ENCODE measurements at regions of chr19 and their contacts with region 1.

Region 1: DNA sequence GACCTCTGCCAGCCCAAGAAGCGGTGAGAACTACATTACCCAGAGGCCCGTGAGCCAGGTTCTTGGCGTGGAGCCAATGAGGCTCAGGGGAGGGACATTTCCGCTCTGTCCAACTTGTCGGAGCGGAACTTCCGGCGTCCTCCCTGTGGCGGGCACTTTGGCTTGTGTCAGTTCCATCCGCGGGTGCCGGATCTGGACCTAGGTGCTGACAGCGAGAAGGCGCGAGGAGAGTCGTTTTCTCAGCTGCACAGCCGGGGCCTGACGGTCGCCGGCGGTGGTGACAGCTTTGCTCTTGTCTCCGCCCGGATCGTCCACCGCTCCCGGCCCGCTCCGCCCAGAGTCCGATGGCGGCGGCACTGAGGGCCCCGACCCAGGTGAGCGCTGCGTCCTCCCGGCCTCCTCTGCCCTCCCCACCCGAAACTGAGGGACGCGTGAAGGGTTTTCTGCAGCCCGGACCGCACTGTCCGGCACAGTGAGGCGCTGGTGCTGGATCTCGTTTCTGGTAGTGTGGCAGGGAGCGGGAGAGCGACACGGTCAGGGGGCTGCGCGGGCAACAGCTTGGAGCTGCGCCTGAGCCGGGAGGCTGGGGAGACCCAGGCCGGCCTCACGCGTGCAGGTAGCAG is at the start of gene ZNF530:
- DNase-seq: peak; percentile 61 to 81 (median 73)
- ATAC-seq: peak; percentile 97
- H3K4me3 ChIP-seq: peak within 1 kb of the TSS; percentile 87
- H3K4me3 Mint-ChIP-seq: peak within 1 kb of the TSS; percentile 71 to 92 (median 89)
- H3K27ac ChIP-seq: peak within 1 kb of the TSS; percentile 69
- H3K27ac Mint-ChIP-seq: peak within 1 kb of the TSS in 8 of 9 donors; percentile 51 to 90 (median 81)
- H3K4me1 ChIP-seq: peaks cover 10% of the 10 kb centered on the region in 2 donors
- H3K4me1 Mint-ChIP-seq: peaks cover 14 to 28% (median 22%) of the 10 kb centered on the region in 7 donors
- H3K27me3 ChIP-seq: no peaks in the 10 kb centered on the region
- H3K27me3 Mint-ChIP-seq: no peaks in the 10 kb centered on the region
- total RNA-seq, gene ZNF530: 2.0 to 10.9 (median 6.2) TPM

Region 2: GRCh38 chr19:57348136-57348535 is 251.7 kb before region 1 on chr19:
- CTCF ChIA-PET with region 1: no interaction called
- POLR2A ChIA-PET with region 1: no interaction called
- intact Hi-C with region 1: no loop called
- DNase-seq: no peak
- ATAC-seq: no peak
- H3K4me3 ChIP-seq: no peak overlapping the region
- H3K4me3 Mint-ChIP-seq: no peak overlapping the region
- H3K27ac ChIP-seq: no peak overlapping the region
- H3K27ac Mint-ChIP-seq: no peak overlapping the region
- H3K4me1 ChIP-seq: peaks cover 11% of the 10 kb centered on the region in 2 donors
- H3K4me1 Mint-ChIP-seq: peaks cover 24 to 29% (median 29%) of the 10 kb centered on the region in 7 donors
- H3K27me3 ChIP-seq: no peaks in the 10 kb centered on the region
- H3K27me3 Mint-ChIP-seq: peaks cover 0 to 11% (median 8%) of the 10 kb centered on the region in 5 donors

Region 3: DNA sequence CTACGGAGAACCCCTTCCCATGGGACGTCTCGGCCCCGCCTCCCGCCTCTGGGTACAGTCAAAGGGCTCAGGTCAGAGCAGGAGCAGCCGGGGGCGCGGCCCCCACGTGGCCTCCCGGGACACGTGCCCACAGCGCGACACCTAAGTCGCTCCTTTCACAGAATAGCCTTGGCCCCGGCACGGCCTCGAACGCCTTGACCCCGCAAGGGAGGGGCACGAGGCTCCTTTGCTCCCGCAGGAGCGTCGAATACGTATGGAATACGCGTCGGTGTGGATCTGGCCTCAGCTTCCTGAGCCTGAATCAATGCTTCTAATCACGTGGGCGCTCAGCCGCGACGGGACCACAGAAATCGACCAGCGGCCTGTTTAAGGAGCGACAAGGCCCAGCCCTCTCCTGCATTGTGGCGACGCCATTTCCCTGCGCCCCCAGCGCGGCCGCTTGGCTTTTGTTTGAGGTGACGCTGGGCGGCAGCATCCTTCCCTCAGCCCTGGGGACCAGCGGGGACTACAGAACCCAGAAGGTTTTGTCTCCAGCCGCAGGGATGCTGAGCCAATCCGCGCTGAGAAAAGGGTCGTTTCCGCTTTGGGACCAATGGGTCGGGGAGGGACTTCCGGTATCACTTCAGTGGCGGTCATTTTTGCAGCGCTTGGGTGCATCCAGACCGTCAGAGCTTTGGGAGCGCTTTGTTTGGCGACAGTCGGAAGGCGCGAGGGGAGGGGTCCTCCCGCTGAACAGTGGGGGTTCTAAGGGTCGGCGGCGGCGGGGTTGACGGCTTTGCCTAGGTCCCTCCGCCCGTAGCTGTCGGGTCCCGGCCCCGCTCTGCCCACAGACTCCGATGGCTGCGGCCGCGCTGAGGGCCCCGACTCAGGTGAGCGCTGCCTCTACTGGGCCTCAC is 16.1 kb before region 1 on chr19 and contains the start of gene ZIK1:
- CTCF ChIA-PET with region 1: interaction called, 4 read pairs
- POLR2A ChIA-PET with region 1: interaction called, 8 read pairs
- intact Hi-C with region 1: loop called (anchors 1 kb)
- DNase-seq: peak; percentile 61 to 91 (median 85)
- ATAC-seq: peak; percentile 93
- H3K4me3 ChIP-seq: peak within 1 kb of the TSS; percentile 55
- H3K4me3 Mint-ChIP-seq: peak within 1 kb of the TSS; percentile 89 to 99 (median 94)
- H3K27ac ChIP-seq: peak within 1 kb of the TSS; percentile 45
- H3K27ac Mint-ChIP-seq: peak within 1 kb of the TSS; percentile 76 to 95 (median 90)
- H3K4me1 ChIP-seq: peaks cover 10 to 12% of the 10 kb centered on the region in 2 donors
- H3K4me1 Mint-ChIP-seq: peaks cover 12 to 28% (median 24%) of the 10 kb centered on the region in 7 donors
- H3K27me3 ChIP-seq: no peaks in the 10 kb centered on the region
- H3K27me3 Mint-ChIP-seq: no peaks in the 10 kb centered on the region
- total RNA-seq, gene ZIK1: 4.8 to 14.1 (median 7.0) TPM

Measured in naive thymus-derived CD4-positive, alpha-beta T cell (primary cell).